Natural killer cell (primary cell): ENCODE measurements at regions of chr14 and their contacts with region 1.

Region 1: DNA sequence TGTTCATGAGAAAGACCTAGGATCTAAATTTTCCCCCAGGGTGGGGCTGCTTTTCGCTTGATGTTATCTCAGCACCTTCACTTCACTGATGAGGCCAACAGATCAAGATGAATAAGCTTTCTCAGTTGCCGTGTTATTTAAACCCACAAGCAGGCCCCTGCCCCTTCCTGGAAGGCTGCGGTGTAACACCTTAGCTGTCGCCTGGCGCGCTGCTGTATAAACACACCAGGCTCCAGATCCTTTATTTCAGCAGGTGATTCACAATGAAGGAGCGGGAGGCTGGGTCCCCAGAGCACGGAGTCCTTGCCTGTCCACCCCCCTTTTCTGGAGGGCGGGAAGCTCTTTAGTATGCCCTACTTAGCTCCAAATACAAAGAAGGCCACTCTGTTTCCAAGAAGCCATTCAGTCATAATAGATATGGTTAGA is 515.4 kb downstream of the FUT8 start:
- DNase-seq: peak; percentile 61 to 82
- ATAC-seq: peak; percentile 85 to 98 (median 91)
- H3K4me3 ChIP-seq: no peak overlapping the region
- H3K4me3 Mint-ChIP-seq: peak overlapping the region; percentile 86
- H3K27ac ChIP-seq: peak overlapping the region; percentile 46
- H3K27ac Mint-ChIP-seq: peak overlapping the region; percentile 78 to 88
- H3K4me1 ChIP-seq: peaks cover 51% of the 10 kb centered on the region
- H3K4me1 Mint-ChIP-seq: peaks cover 58 to 69% of the 10 kb centered on the region in 2 donors
- H3K27me3 ChIP-seq: no peaks in the 10 kb centered on the region
- H3K27me3 Mint-ChIP-seq: no peaks in the 10 kb centered on the region
- CTCF ChIP-seq: no peak

Region 2: DNA sequence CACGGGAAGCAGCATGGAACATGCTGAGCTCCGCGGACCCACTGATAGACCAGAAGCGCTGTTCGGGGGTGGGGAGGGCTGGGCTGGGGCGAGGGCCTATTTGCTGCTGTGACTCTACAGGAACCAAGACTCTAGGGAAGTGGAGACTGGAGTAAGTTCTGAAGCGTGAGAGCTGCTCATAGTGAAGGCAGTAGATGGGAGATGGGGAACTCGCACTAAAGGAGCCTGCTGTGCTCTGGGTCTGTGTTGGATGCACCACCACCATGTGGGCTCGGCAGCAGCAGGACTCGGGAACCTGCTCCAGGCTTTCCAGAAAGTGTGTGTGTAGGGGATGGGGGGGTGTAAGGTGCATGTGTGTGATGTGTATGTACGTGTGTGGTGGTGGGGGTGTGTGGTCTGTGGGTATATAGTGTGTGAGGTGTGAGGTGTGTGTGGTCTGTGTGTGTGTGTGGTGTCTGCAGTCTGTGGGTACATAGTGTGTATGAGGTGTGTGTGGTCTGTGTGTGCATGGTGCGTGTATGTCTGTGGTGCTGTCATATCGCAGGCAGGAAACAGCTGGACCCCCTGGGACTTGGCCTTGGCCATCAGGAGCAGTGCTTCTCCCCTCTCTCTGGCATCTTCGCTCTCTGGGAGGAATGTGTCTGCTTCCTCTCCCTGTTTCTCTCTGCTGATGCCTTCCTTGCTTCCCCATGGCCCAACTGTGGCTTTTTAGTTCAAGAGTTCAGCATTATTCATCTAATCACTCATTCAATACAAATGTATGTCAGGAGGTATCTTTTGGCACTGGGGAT is 136.6 kb before region 1 on chr14:
- intact Hi-C with region 1: loop called (anchors 5 kb)
- DNase-seq: peak; percentile 42 to 83
- ATAC-seq: peak; percentile 62 to 88 (median 77)
- H3K4me3 ChIP-seq: no peak overlapping the region
- H3K4me3 Mint-ChIP-seq: no peak overlapping the region
- H3K27ac ChIP-seq: peak overlapping the region; percentile 47
- H3K27ac Mint-ChIP-seq: no peak overlapping the region
- H3K4me1 ChIP-seq: peaks cover 27% of the 10 kb centered on the region
- H3K4me1 Mint-ChIP-seq: no peaks in the 10 kb centered on the region
- H3K27me3 ChIP-seq: peaks cover 29% of the 10 kb centered on the region
- H3K27me3 Mint-ChIP-seq: peaks cover 11 to 21% of the 10 kb centered on the region in 2 donors
- CTCF ChIP-seq: no peak

Region 3: DNA sequence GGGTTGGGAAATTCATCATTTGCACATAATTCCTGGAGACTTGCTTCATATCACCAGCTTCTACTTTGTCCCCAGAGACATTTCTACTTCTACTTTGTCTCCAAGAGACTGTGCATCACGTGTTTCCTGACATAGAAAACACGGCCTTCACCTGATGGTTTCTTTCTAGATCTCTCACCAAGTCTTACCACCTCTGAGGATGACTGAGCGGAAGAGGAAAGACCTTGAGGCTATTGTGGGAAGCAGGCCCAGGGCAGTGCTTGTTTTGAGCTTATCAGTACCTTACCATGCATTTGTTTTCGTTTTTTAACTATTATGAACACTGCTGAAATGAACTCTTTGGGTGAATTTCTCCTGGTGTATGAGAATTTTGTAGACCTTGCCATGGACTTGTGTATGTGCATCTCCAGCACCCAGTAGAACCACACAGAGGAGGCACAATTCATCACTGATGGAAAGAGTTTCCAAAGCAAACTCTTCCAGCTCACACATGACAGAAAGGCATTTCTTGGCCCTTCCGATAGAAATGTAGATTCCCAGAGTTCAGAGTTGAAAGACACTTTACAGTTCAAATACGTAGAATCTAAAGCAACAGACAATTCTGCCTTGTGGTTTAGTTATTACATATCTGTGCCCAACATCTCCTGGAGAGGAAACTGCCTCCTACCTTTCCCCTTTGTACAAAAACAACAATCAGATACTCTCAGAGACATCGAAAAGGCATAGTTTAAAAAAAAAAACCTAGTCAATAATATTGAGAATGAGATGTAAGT is 80.7 kb before region 1 on chr14:
- intact Hi-C with region 1: loop called (anchors 5 kb)
- DNase-seq: peak; percentile 27 to 91
- ATAC-seq: peak; percentile 73 to 83 (median 75)
- H3K4me3 ChIP-seq: no peak overlapping the region
- H3K4me3 Mint-ChIP-seq: peak overlapping the region; percentile 84
- H3K27ac ChIP-seq: peak overlapping the region; percentile 77
- H3K27ac Mint-ChIP-seq: peak overlapping the region; percentile 92 to 94
- H3K4me1 ChIP-seq: peaks cover 52% of the 10 kb centered on the region
- H3K4me1 Mint-ChIP-seq: peaks cover 30 to 38% of the 10 kb centered on the region in 2 donors
- H3K27me3 ChIP-seq: no peaks in the 10 kb centered on the region
- H3K27me3 Mint-ChIP-seq: no peaks in the 10 kb centered on the region
- CTCF ChIP-seq: no peak

Region 4: GRCh38 chr14:66359500-66359899 is 431.6 kb after region 1 on chr14:
- intact Hi-C with region 1: no loop called
- DNase-seq: peak in 1 of 2 donors; percentile 82
- ATAC-seq: peak in 1 of 3 donors; percentile 55
- H3K4me3 ChIP-seq: no peak overlapping the region
- H3K4me3 Mint-ChIP-seq: no peak overlapping the region
- H3K27ac ChIP-seq: no peak overlapping the region
- H3K27ac Mint-ChIP-seq: no peak overlapping the region
- H3K4me1 ChIP-seq: no peaks in the 10 kb centered on the region
- H3K4me1 Mint-ChIP-seq: no peaks in the 10 kb centered on the region
- H3K27me3 ChIP-seq: no peaks in the 10 kb centered on the region
- H3K27me3 Mint-ChIP-seq: peaks cover 3 to 22% of the 10 kb centered on the region in 2 donors
- CTCF ChIP-seq: peak; percentile 71